WTC11 (cell line): ENCODE measurements at regions of chr13 and their contacts with region 1.

Region 1: DNA sequence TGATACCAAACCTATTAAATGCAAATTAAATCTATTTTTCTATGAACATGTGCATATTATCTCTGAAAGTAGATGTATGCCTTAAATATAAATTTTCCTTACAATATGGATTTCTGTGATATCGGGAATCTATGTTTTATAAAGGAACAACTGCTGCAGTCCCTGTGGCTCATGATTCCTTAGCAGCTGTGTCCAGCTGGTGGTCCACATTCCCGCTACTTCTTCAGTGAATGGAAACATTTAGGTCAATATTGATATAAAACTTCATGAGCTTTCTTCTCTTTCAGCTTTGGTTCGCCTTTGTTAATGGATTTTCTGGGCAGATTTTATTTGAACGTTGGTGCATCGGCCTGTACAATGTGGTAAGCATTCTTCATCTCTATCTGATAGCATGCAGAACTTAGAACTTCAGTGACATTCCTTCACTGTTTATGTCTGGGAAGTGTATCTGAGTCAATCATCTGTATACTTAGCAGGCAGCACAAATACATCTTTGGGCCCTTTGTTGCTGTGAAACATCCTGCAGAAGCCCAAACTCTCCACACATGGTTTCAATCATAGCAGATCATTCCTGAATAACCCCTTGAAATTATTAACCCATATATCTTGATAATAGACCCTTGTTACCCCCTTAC is 223.9 kb downstream of the SHISA2 start:
- DNase-seq: no peak
- ATAC-seq: no peak
- H3K4me3 Mint-ChIP-seq: no peak overlapping the region
- H3K27ac Mint-ChIP-seq: no peak overlapping the region
- H3K4me1 Mint-ChIP-seq: no peaks in the 10 kb centered on the region; the same call in 1 of the 2 replicates
- H3K27me3 Mint-ChIP-seq: no peaks in the 10 kb centered on the region
- CTCF ChIP-seq: no peak

Region 2: DNA sequence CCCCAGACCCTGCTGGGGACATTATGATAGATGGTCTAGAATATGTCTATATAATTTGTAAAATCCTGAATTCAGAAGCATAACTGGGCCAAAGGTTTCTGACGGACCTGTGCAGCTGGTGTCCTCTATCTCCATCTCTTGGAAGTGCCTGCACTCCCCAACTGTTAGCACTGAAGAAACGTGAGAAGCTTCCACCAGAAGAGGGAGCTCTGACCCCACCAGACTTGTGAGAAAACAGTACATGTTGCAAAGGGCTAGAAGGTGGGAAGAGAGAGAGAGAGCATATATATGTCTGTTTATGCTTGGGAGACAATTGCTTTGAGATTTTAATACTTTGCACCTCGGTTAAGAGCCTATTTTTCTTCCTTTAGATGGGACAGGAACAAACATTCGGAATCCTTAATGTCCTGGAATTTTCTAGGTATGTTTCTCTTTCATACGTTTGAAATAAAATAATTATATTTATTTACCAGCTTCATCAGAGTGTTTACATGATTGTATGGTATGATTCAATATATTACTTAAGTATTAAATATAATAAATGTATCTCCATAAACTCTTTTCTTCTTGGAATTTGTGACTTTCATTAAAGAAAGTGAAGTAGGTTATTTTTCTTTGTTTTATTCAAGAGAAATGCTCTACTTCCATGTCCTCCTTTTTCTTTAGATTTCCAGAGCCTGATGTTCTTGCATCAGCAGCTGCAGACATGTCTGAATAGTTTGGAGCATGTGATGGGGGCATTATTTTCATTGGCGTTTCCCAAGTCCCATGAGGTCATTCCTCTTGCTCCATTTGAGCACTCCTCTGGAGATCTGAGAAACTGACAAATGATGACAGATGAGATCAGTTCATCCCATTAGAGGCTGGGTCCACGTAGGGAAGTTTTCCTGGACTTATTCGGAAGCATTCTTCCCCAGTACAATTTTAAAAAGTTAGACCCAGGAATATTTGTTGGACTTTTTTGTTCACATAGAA is 253.2 kb before region 1 on chr13:
- CTCF ChIA-PET with region 1: interaction called, 16 read pairs
- POLR2A ChIA-PET with region 1: no interaction called
- DNase-seq: peak; percentile 87
- ATAC-seq: peak; percentile 92
- H3K4me3 Mint-ChIP-seq: no peak overlapping the region
- H3K27ac Mint-ChIP-seq: no peak overlapping the region
- H3K4me1 Mint-ChIP-seq: 0 out of 2 replicates have a peak, but pooled peaks cover 5% of the 10 kb centered on the region
- H3K27me3 Mint-ChIP-seq: no peaks in the 10 kb centered on the region
- CTCF ChIP-seq: peak; percentile 71

Region 3: GRCh38 chr13:26062844-26063444 is 235.0 kb after region 1 on chr13:
- CTCF ChIA-PET with region 1: interaction called, 19 read pairs
- POLR2A ChIA-PET with region 1: no interaction called
- DNase-seq: no peak
- ATAC-seq: 0 out of 2 replicates have a peak, but pooled peaks have one; percentile 39
- H3K4me3 Mint-ChIP-seq: no peak overlapping the region
- H3K27ac Mint-ChIP-seq: no peak overlapping the region
- H3K4me1 Mint-ChIP-seq: peaks cover 29% of the 10 kb centered on the region
- H3K27me3 Mint-ChIP-seq: no peaks in the 10 kb centered on the region
- CTCF ChIP-seq: no peak